ENCODE measurements at regions of chr14 and their contacts with region 1.

Region 1: GRCh38 chr14:102524466-102525218 is 15.1 kb upstream of the ANKRD9 start:
- DNase-seq: peak; percentile 98
- H3K4me3 ChIP-seq: peak overlapping the region; percentile 32 to 74 (median 56)
- H3K27ac ChIP-seq: peak overlapping the region; percentile 84
- H3K4me1 ChIP-seq: peaks cover 33% of the 10 kb centered on the region
- H3K27me3 ChIP-seq: no peaks in the 10 kb centered on the region
- CTCF ChIP-seq: peak; percentile 83 to 96

Region 2: DNA sequence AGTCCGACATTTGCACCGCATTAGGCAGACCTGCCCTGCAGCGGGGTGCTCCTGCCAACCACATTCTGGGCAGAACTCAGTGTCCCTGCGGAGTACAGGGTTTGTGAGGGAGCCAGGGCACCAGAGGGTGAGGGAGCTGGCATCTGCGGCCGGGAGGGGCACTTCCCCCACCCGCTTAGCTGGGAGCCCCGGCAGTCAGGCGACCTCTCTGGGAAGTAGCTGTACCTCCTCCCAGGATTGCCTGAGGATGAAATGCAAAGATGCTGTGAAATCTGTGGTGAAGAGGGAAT is 73.6 kb before region 1 on chr14:
- CTCF ChIA-PET with region 1: no interaction called
- dilution Hi-C with region 1: no loop called
- in situ Hi-C with region 1: no loop called
- intact Hi-C with region 1: no loop called
- DNase-seq: no peak
- H3K4me3 ChIP-seq: no peak overlapping the region
- H3K27ac ChIP-seq: no peak overlapping the region
- H3K4me1 ChIP-seq: no peaks in the 10 kb centered on the region
- H3K27me3 ChIP-seq: no peaks in the 10 kb centered on the region
- CTCF ChIP-seq: no peak

Region 3: DNA sequence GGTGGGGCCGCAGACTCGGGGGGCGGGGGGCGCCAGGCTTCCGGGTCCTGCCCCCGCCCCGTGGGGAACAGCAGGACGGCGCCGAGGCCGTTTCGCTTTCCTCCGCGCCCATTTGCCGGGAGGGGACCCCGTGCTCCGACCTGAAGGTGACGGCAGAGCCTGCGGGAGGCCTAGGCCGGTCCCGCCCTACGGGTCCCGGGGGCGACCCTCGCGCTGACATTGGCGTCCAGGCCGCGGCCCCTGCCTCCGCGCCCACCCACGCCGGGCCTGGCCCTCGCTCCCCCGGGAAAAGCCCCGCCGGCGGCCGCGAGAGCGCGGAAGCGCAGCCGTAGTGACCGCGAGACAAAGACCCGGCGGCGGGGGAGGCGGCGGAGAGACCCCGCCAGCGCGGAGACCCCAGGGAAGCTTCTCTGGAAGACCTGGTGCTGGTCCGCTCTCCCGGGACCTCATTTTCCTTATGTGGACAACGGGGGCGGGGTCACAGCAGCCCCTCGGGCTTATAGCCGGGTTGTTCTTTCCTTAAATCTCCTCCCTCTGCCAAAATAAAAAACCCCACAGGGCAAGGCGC is 30.7 kb after region 1 on chr14:
- CTCF ChIA-PET with region 1: no interaction called
- dilution Hi-C with region 1: no loop called
- in situ Hi-C with region 1: no loop called
- intact Hi-C with region 1: loop called (anchors 1 kb)
- DNase-seq: no peak
- H3K4me3 ChIP-seq: peak overlapping the region; percentile 20 to 49 (median 47)
- H3K27ac ChIP-seq: no peak overlapping the region
- H3K4me1 ChIP-seq: peaks cover 38% of the 10 kb centered on the region
- H3K27me3 ChIP-seq: no peaks in the 10 kb centered on the region
- CTCF ChIP-seq: no peak

Region 4: GRCh38 chr14:102608064-102608446 is 83.4 kb after region 1 on chr14:
- CTCF ChIA-PET with region 1: no interaction called
- dilution Hi-C with region 1: no loop called
- in situ Hi-C with region 1: no loop called
- intact Hi-C with region 1: no loop called
- DNase-seq: no peak
- H3K4me3 ChIP-seq: no peak overlapping the region
- H3K27ac ChIP-seq: no peak overlapping the region
- H3K4me1 ChIP-seq: peaks cover 19% of the 10 kb centered on the region
- H3K27me3 ChIP-seq: no peaks in the 10 kb centered on the region
- CTCF ChIP-seq: no peak

Region 5: GRCh38 chr14:102694530-102695166 is 170.0 kb after region 1 on chr14:
- CTCF ChIA-PET with region 1: interaction called, 7 read pairs
- dilution Hi-C with region 1: no loop called
- in situ Hi-C with region 1: no loop called
- intact Hi-C with region 1: loop called (anchors 2 kb)
- DNase-seq: peak; percentile 54
- H3K4me3 ChIP-seq: no peak overlapping the region
- H3K27ac ChIP-seq: no peak overlapping the region
- H3K4me1 ChIP-seq: peaks cover 7% of the 10 kb centered on the region
- H3K27me3 ChIP-seq: no peaks in the 10 kb centered on the region
- CTCF ChIP-seq: peak; percentile 52 to 55

Region 6: DNA sequence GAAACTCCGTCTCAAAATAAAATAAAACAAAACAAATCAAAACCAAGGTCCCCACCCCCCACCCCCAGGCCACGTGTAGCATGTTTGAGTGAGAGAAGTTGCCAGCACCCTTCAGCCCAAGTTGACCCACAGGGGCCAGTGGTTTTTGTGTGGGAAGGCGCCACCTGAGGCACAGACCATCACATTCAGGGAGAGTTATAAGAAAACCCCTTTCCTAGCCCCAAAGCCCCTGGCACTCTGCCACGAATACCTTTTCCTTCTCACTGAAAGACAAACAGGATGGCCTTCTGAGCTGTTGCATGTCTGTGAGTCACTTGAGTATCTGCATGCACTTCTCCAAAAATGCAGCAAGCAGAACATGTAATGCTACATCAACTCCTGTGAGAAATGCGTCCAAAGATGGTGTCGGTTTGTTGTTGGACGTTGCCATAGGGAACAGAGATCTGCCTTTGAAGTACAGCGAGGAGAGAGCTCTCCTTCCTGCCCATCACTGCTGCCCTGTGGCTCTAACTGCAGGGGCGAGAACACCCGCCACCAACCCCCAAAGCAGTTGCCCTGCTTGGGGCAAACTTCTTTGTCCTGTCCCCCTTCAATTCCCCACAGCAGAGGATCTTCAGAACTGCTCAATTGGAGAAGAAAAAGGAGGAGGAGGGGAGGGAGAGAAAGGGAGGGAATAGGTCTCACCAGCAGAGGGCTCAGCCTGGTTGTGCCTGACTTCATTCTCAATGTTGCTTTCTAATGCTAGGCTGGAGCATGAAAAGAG is 249.9 kb after region 1 on chr14:
- CTCF ChIA-PET with region 1: interaction called, 3 read pairs
- dilution Hi-C with region 1: no loop called
- in situ Hi-C with region 1: no loop called
- intact Hi-C with region 1: loop called (anchors 10 kb)
- DNase-seq: peak; percentile 63
- H3K4me3 ChIP-seq: no peak overlapping the region
- H3K27ac ChIP-seq: no peak overlapping the region
- H3K4me1 ChIP-seq: peaks cover 24% of the 10 kb centered on the region
- H3K27me3 ChIP-seq: no peaks in the 10 kb centered on the region
- CTCF ChIP-seq: peak; percentile 74 to 83

Region 7: DNA sequence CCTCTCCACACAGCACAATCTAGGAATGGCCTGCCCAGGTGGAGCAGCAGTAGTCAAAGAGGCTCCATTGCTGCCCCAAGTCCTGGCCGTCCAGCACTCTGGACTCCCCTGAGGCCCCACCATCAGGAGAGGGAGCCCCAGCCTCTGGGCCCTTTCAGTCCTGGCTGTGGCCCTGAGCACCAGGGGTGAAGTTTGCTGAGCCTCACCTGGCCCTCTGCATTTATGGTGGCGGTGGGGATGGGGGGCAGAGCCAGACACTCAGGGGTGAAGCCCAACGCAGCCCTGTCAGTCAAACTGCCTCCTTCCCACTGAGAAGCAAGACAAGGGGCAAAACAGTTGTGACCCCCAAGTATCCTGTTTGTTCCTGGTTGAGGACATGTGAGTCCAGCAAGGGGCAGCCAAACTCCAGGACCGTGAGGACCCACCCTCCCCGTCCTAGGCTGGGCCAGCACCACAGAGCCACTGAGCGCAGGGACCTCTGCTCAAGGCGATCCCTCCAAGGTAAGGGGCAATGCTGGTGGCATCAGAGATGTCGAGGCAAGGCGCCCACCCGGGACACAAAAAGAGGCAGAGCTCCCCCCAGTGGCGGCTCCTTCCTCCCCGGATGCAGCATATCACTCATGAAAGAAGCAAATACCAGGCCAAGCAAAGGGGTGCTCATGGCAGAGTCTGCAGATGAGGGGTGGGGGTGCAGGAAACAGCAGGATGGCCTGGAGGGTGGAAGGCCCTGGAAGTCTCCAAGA is 393.0 kb after region 1 on chr14:
- CTCF ChIA-PET with region 1: no interaction called
- dilution Hi-C with region 1: no loop called
- in situ Hi-C with region 1: no loop called
- intact Hi-C with region 1: loop called (anchors 1 kb)
- DNase-seq: no peak
- H3K4me3 ChIP-seq: no peak overlapping the region
- H3K27ac ChIP-seq: no peak overlapping the region
- H3K4me1 ChIP-seq: peaks cover 2% of the 10 kb centered on the region
- H3K27me3 ChIP-seq: peaks cover 2% of the 10 kb centered on the region
- CTCF ChIP-seq: peak; percentile 54 to 62